ENCODE measurements at regions of chr17 and their contacts with region 1.

Region 1: DNA sequence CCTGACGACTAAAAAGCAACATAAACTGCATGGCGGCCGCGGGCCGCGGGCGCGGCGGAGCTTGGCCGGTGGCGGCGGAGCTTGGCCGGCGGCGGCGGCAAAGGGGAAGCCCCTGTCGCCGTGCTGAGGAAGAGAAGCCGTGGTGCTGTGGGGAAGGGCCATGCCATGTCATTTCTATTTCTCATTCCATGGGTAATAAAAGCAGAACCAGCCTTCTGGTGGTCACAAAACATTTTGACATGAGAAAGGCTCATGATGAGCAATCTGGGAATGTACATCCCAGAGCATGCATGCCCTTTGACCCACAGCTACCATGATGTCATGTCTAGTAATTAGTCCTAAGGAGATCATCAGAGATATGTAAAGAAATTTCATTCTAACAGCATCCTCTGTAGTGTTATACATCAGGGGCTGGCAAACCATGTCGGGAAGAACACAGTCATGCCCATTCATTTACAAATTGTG is 23.9 kb upstream of the HEATR6 start:
- DNase-seq: peak in 4 of 9 experiments; percentile 7 to 52 (median 34)
- ATAC-seq: peak; percentile 65
- H3K4me3 ChIP-seq: no peak overlapping the region
- H3K4me3 Mint-ChIP-seq: peak overlapping the region; percentile 69
- H3K27ac ChIP-seq: no peak overlapping the region
- H3K27ac Mint-ChIP-seq: no peak overlapping the region
- H3K4me1 ChIP-seq: peaks cover 5% of the 10 kb centered on the region
- H3K4me1 Mint-ChIP-seq: peaks cover 11% of the 10 kb centered on the region
- H3K27me3 ChIP-seq: peaks cover 0 to 6% of the 10 kb centered on the region in 2 experiments
- H3K27me3 Mint-ChIP-seq: peaks cover 37% of the 10 kb centered on the region
- CTCF ChIP-seq: no peak

Region 2: GRCh38 chr17:60065136-60065535 is 37.5 kb before region 1 on chr17:
- CTCF ChIA-PET with region 1: no interaction called
- POLR2A ChIA-PET with region 1: no interaction called
- intact Hi-C with region 1: no loop called
- DNase-seq: no peak
- ATAC-seq: no peak
- H3K4me3 ChIP-seq: no peak overlapping the region
- H3K4me3 Mint-ChIP-seq: no peak overlapping the region
- H3K27ac ChIP-seq: no peak overlapping the region
- H3K27ac Mint-ChIP-seq: no peak overlapping the region
- H3K4me1 ChIP-seq: no peaks in the 10 kb centered on the region
- H3K4me1 Mint-ChIP-seq: no peaks in the 10 kb centered on the region
- H3K27me3 ChIP-seq: no peaks in the 10 kb centered on the region
- H3K27me3 Mint-ChIP-seq: no peaks in the 10 kb centered on the region
- CTCF ChIP-seq: no peak

Region 3: DNA sequence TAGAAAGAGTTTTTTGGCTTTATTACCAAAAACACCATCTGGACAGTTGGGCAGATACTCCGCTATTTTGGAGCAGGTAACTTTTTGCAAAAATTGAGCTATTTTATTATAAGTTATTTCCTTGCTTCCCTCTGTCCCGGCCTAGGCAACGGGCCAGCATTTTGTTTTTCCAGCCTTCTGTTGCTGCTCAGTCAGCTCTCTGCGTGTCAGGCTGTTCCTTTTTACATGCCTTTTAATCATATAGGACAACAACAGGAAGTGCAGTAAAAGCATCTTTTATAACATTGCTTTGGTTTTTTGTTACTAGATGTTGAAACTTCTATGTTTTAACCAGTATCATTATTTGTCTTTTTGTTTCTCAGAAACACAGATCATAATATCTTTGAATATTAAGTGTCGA is 527.7 kb after region 1 on chr17:
- CTCF ChIA-PET with region 1: no interaction called
- POLR2A ChIA-PET with region 1: no interaction called
- intact Hi-C with region 1: loop called in 1 of 2 experiments (anchors 10 kb)
- DNase-seq: no peak
- ATAC-seq: no peak
- H3K4me3 ChIP-seq: no peak overlapping the region
- H3K4me3 Mint-ChIP-seq: no peak overlapping the region
- H3K27ac ChIP-seq: no peak overlapping the region
- H3K27ac Mint-ChIP-seq: peak overlapping the region; percentile 62
- H3K4me1 ChIP-seq: no peaks in the 10 kb centered on the region
- H3K4me1 Mint-ChIP-seq: peaks cover 8% of the 10 kb centered on the region
- H3K27me3 ChIP-seq: no peaks in the 10 kb centered on the region
- H3K27me3 Mint-ChIP-seq: no peaks in the 10 kb centered on the region
- CTCF ChIP-seq: no peak